ENCODE measurements at regions of chr2 and their contacts with region 1.

Region 1: DNA sequence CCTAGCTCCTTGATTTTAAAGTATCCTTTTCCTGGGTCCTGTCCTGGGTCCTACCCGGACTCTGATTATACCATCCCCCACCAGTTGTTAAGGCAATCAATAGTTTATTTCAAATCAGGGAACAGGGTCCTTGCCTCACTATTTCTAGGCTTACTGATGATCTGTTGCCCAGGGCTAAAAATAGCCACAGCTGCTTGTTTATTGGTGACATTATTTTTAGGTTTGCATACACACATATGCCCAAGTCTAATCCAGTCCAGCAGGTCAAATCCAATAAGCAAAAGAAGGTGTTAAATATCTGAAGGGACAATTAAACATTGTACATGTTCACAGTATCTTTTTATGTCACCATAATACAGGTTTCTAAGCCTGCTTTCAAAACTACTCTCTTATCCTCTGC is 66.0 kb downstream of the RAB10 start:
- DNase-seq: peak in 1 of 2 donors; percentile 27
- ATAC-seq: peak; percentile 83 to 91
- H3K4me3 ChIP-seq: peak overlapping the region in 3 of 4 donors; percentile 2 to 7 (median 4)
- H3K27ac ChIP-seq: peak overlapping the region; percentile 85 to 90 (median 88)
- H3K4me1 ChIP-seq: peaks cover 44 to 48% of the 10 kb centered on the region in 2 donors
- H3K27me3 ChIP-seq: no peaks in the 10 kb centered on the region
- CTCF ChIP-seq: no peak
- POLR2A ChIP-seq: no peak

Region 2: GRCh38 chr2:24315669-24316068 is 1784.3 kb before region 1 on chr2:
- in situ Hi-C with region 1: no loop called
- intact Hi-C with region 1: no loop called
- DNase-seq: no peak
- ATAC-seq: no peak
- H3K4me3 ChIP-seq: no peak overlapping the region
- H3K27ac ChIP-seq: no peak overlapping the region
- H3K4me1 ChIP-seq: peaks cover 8 to 24% of the 10 kb centered on the region in 2 donors
- H3K27me3 ChIP-seq: no peaks in the 10 kb centered on the region
- CTCF ChIP-seq: no peak
- POLR2A ChIP-seq: no peak

Region 3: DNA sequence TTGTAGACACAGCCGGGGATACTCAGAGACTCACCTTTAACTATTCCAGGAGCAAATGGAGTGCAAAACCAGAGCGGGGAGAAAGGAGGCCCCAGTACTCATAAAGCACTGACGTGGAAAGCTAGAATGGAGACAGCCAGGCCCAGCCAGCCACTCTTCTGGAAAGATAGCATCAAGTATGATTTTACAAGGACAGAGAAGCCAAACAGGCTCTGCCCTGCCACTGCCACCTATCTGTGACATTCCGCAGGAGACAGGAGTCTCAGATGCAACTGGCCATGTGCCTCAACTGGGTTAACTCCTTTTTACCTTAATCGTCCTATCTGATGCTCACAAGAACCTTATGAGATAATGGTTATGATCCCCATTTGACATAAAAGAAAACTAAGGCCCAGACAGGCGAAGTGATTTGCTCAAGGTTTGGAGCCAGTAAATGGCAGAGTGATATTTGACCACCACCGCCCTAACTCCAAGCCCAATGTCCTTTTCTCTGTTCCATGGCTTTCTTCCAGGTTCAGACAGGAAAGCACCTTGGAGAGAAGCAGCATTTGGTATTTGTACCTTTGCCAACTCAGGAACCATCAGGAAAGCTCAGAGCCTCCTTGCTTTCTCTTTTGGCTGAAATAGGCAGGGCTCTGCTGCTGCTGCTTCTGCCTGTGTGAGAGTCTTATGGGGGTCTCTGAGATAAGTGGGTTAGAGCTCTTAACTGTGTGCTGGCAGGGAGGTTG is 133.2 kb before region 1 on chr2:
- in situ Hi-C with region 1: no loop called
- intact Hi-C with region 1: no loop called
- DNase-seq: no peak
- ATAC-seq: peak in 1 of 2 donors; percentile 24
- H3K4me3 ChIP-seq: no peak overlapping the region
- H3K27ac ChIP-seq: no peak overlapping the region
- H3K4me1 ChIP-seq: peaks cover 3 to 7% of the 10 kb centered on the region in 2 donors
- H3K27me3 ChIP-seq: no peaks in the 10 kb centered on the region
- CTCF ChIP-seq: no peak
- POLR2A ChIP-seq: no peak

Region 4: DNA sequence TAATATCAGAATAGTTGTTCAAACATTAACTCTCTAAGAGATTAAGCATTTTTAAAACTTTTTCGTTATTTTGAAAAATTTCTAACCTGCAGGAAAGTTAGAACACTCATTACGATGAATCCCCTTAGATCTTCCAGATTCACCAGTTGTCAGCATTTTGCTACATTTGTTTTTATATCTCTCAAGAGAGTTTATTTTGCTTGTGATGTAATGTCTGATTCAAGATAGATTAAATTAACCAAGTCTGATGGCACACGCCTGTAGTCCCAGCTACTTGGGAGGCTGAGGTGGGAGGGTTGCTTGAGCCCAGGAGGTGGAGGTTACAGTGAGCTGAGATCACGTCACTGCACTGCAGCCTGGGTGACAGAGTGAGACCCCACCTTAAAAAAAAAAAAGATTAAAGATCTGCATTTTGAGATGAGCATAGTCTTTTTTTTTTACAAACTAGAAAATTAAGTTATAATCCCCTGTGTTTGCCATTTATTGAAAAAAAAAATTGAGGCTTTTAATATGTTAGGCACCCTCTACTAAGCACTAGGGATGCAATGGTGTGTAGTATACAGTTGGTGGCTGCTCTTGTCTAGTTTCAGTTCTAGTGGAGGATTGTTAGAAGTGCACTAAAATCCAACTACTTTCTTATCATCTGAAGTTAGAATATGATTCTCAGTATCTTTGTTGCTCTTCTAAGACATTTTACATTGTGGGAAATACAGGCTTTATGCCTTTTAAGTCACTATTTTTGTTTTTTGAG is 45.2 kb before region 1 on chr2:
- in situ Hi-C with region 1: no loop called
- intact Hi-C with region 1: no loop called
- DNase-seq: no peak
- ATAC-seq: no peak
- H3K4me3 ChIP-seq: no peak overlapping the region
- H3K27ac ChIP-seq: peak overlapping the region in 1 of 4 donors; percentile 16
- H3K4me1 ChIP-seq: peaks cover 55 to 67% of the 10 kb centered on the region in 2 donors
- H3K27me3 ChIP-seq: no peaks in the 10 kb centered on the region
- CTCF ChIP-seq: no peak
- POLR2A ChIP-seq: no peak

Region 5: GRCh38 chr2:26122630-26123029 is 22.7 kb after region 1 on chr2:
- in situ Hi-C with region 1: no loop called
- intact Hi-C with region 1: loop called (anchors 2 kb)
- DNase-seq: no peak
- ATAC-seq: peak; percentile 31 to 45
- H3K4me3 ChIP-seq: peak overlapping the region in 1 of 4 donors; percentile 17
- H3K27ac ChIP-seq: peak overlapping the region; percentile 77 to 95 (median 86)
- H3K4me1 ChIP-seq: peaks cover 83 to 85% of the 10 kb centered on the region in 2 donors
- H3K27me3 ChIP-seq: no peaks in the 10 kb centered on the region
- CTCF ChIP-seq: no peak
- POLR2A ChIP-seq: no peak